ENCODE measurements at regions of chr19 and their contacts with region 1.

Region 1: DNA sequence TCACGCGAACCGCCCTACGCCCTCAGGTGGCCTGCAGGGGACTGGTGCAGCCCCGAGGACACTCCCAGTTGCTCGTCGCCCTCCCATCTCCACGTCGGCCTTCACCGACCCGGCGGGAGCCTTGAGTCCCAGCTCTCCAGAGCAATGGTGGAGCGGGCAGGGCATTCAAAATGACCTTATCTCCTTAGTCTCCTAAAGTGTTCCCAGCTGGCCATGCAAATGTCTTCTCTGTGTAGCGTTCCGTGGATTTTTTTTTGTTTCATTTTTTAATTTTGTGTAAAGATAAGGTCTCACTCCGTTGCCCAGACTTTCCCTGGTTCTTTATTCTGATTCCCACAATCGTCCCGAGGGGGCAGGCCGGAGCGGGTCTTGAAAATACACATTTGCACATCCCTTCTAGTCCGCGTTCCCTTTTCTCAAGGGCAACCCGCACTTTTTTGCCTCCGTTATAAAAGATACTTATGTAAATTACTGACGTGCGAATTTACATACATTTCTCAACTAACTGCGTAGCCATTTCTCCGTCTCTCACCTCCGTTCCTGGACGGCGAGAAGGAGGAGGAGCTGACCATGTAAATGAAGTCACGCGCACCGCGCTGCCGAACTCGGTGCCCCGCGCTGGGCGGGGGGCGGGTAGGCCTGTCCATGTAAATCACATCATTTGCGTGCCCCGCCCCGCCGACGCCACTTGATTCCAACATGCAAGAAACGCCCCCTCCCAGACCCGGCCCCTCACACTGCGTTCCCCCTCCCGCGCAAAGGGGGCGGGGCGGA is 581 bp upstream of the EGLN2 start:
- DNase-seq: peak; percentile 100
- H3K4me3 ChIP-seq: peak overlapping the region; percentile 55 to 99
- H3K27ac ChIP-seq: peak overlapping the region; percentile 89 to 95
- H3K4me1 ChIP-seq: peaks cover 28 to 40% of the 10 kb centered on the region in 2 donors
- H3K27me3 ChIP-seq: no peaks in the 10 kb centered on the region
- CTCF ChIP-seq: peak; percentile 28 to 54 (median 48)

Region 2: GRCh38 chr19:40777937-40778705 is 20.3 kb before region 1 on chr19 and contains the start of gene RAB4B:
- intact Hi-C with region 1: loop called (anchors 1 kb)
- DNase-seq: peak; percentile 99 to 100
- H3K4me3 ChIP-seq: peak within 1 kb of the TSS; percentile 81 to 91
- H3K27ac ChIP-seq: peak within 1 kb of the TSS; percentile 97 to 99
- H3K4me1 ChIP-seq: peaks cover 0 to 13% of the 10 kb centered on the region in 2 donors
- H3K27me3 ChIP-seq: no peaks in the 10 kb centered on the region
- CTCF ChIP-seq: no peak
- total RNA-seq, gene RAB4B: 56.8 TPM

Region 3: DNA sequence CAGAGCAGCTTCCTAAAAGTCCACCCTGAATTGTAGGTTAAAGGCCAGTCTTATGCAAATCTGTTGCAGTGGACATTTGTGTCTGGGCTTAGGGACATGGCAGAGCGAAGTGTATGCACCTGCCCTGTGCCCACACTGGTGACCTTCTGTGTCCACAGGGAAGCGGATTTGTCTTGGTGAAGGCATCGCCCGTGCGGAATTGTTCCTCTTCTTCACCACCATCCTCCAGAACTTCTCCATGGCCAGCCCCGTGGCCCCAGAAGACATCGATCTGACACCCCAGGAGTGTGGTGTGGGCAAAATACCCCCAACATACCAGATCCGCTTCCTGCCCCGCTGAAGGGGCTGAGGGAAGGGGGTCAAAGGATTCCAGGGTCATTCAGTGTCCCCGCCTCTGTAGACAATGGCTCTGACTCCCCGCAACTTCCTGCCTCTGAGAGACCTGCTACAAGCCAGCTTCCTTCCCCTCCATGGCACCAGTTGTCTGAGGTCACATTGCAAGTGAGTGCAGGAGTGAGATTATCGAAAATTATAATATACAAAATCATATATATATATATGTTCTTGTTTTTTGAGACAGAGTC is 218.2 kb after region 1 on chr19:
- intact Hi-C with region 1: no loop called
- DNase-seq: no peak
- H3K4me3 ChIP-seq: no peak overlapping the region
- H3K27ac ChIP-seq: no peak overlapping the region
- H3K4me1 ChIP-seq: no peaks in the 10 kb centered on the region
- H3K27me3 ChIP-seq: no peaks in the 10 kb centered on the region
- CTCF ChIP-seq: no peak